ENCODE measurements at regions of chr20 and their contacts with region 1.

Region 1: DNA sequence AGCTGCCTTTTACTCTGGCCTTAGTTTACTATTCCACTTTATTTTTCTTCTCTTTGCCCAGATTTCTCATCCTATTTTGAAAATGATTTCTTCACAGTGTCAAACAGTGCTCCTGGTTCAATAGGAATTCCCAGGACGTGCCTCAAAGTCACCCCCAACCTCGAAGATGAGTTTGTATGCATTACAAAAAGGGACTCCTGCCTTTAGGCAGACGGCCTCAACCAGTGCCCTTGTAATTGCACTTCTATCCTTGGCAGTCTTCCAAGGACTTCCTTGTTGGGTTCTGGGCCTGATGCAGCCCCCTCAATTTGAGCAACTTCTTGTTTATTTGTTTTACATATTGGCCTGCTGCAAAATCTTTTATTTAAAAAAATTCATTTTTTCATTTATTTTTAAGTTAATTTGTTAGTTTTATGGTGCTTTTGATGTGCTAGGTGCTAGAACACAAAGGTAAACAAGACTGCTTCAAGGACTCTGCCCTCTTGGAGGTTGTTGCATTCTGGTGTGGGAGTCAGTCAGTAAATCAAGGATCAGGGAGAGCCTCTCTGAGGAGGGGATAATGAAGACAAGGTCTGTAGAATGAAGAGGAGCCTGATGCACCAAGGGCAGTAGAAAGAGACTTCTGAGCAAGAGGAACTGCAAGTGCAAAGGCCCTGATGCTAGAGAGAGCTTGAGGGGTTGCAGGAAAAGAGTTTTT is 181.5 kb upstream of the LAMP5 start:
- DNase-seq: no peak
- H3K4me3 ChIP-seq: no peak overlapping the region
- CTCF ChIP-seq: no peak

Region 2: DNA sequence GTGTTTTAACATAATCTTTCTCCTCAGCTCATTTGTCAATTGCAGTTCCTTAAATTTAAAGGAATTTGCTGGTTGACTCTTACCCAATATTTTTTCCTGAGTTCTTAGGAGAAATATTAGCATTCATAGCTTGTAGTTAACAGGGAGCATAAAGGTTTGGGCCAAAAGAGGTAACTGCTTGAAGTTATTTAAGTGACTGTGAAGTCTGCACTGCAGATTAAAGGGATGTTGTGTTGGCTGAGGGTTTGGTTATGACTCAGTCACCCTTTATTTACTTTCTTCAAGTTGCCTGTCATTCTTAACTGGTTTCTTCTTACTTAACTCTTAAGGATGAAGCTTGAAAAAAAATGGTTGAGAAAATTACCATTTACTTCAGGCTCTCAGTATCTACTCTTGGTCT is 38.9 kb before region 1 on chr20:
- in situ Hi-C with region 1: loop called (anchors 5 kb)
- DNase-seq: peak; percentile 22
- H3K4me3 ChIP-seq: no peak overlapping the region
- CTCF ChIP-seq: no peak

Region 3: GRCh38 chr20:9516234-9516871 is 183.4 kb after region 1 on chr20:
- in situ Hi-C with region 1: no loop called
- DNase-seq: peak; percentile 51
- H3K4me3 ChIP-seq: peak overlapping the region; percentile 28
- CTCF ChIP-seq: no peak